GM12878 (cell line): ENCODE measurements at regions of chr5 and their contacts with region 1.

Region 1: DNA sequence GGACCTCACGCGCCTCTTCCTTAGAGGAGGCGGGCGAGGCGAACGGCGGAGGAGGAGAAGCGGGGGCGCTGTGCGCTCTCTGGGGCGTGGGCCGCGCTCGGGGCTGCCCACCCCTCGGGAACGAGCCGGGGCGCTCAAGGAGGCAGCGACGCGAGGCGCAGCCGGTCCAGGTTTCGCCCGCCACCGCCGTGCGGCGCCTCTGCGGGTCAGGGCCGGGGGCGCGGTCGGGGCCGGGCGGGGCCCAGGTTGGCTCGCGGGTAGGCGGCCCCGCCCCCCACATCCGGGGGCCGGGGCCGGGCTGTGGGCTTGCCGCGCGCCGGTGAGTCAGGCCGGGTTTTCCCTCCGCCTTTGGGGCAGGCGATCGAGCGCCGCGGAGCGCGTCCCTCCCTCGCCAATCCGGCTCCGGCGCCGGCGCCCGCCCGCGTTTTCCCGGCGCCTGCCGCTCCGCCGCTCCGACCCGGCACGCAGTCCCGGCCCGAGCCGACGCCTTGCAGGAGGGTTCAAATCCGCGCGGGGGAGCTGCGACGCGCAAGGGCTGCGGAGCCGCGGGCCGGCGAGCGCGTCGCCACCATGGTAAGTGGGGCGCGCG is at the start of gene N4BP3:
- DNase-seq: no peak
- ATAC-seq: peak; percentile 70
- H3K4me3 ChIP-seq: peak within 1 kb of the TSS; percentile 88
- H3K27ac ChIP-seq: peak within 1 kb of the TSS; percentile 72
- H3K4me1 ChIP-seq: peaks cover 30% of the 10 kb centered on the region
- H3K27me3 ChIP-seq: no peaks in the 10 kb centered on the region
- CTCF ChIP-seq: peak in 1 of 3 experiments; percentile 17; a peak in 2 of 6 replicates
- EP300 ChIP-seq: peak; percentile 11 to 62; a peak in 1 of 4 replicates
- POLR2A ChIP-seq: no peak
- RAD21 ChIP-seq: no peak
- polyA plus RNA-seq, gene N4BP3: 0.06 to 0.27 TPM

Region 2: DNA sequence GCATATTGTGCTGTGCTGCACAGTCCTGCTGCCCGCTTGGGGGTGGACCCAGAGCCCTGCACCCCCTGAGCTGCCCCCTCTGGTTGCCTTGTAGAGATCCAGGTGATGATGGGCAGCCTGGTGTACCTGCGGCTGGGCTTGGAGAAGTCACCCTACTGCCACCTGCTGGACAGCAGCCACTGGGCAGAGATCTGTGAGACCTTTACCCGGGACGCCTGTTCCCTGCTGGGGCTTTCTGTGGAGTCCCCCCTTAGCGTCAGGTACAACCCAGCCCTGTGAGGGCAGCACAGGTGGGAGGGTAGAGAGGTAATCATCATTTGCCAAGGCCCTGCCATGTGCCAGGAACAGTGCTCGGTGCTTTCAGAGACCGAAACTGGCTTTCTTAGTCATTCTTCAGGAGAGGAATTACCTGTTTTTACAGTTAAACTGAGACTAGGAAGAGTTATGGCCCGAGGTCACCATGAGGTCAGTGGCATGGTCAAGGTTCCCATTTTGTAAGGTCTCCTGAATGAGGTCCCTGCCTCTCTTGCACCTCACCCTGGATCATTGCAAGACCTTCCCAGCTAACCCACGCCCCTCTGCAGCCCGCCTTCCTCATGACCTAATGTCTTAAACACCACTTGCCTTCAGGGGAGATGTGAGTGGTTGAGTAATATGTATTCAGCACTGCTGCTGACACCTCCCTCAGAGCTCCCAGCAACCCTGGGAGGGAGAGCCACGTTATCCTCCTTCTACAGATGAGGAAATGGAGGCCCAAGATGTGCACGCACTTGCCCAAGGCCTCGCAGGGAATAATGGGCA is 32.9 kb after region 1 on chr5:
- CTCF ChIA-PET with region 1: interaction called, 14 read pairs
- POLR2A ChIA-PET with region 1: interaction called, 4 read pairs
- RAD21 ChIA-PET with region 1: no interaction called
- SMC1A ChIA-PET with region 1: interaction called, 3 read pairs
- in situ Hi-C with region 1: no loop called
- intact Hi-C with region 1: no loop called
- DNase-seq: no peak
- ATAC-seq: peak; percentile 98
- H3K4me3 ChIP-seq: no peak overlapping the region
- H3K27ac ChIP-seq: no peak overlapping the region
- H3K4me1 ChIP-seq: peaks cover 13% of the 10 kb centered on the region
- H3K27me3 ChIP-seq: no peaks in the 10 kb centered on the region
- CTCF ChIP-seq: peak; percentile 85 to 93 (median 89); a peak in 5 of 6 replicates
- EP300 ChIP-seq: no peak
- POLR2A ChIP-seq: peak; percentile 33; the same call in 1 of the 2 replicates
- RAD21 ChIP-seq: peak; percentile 56

Region 3: DNA sequence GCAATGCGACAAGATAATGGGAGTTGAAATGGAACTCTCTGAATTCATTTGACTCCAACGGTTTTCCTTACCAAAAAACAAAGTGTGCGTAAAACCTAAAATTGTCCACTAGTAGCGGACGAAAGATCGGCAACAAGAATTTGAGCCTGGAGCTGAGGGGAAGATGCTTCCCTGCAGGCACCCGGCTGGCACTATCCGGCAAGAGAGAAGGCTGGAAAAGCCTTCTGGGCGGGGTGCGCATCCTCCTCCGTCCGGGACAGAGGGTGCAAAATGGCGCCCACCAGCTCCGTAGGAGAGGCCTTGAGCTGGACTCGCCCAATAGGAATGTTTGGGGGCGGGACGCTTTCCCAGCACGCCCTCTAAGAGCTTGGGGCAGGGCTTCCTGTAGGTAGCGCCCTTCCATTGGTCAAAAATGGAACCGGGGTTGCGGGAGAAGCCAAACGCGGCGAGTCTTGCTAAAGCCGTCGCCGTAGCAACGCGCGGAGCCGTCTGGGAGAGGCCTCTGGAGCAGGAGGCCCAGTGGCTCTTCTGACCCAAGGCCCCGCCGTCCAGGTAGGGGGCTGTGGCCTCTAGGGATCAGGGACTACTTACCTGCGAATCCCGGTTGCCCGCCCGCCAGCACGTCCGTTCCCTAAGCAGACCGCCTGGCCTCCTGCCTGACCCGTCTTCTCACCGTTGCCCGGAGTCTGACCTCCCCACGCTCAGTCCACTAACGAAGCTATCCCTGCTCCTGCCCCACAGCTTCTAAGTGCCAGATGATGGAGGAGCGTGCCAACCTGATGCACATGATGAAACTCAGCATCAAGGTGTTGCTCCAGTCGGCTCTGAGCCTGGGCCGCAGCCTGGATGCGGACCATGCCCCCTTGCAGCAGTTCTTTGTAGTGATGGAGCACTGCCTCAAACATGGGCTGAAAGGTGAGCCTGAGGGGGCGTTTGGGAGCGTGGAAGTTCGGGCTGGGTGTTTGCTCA is 1446.3 kb after region 1 on chr5:
- CTCF ChIA-PET with region 1: no interaction called
- POLR2A ChIA-PET with region 1: no interaction called
- RAD21 ChIA-PET with region 1: no interaction called
- SMC1A ChIA-PET with region 1: no interaction called
- in situ Hi-C with region 1: loop called (anchors 10 kb)
- intact Hi-C with region 1: no loop called
- DNase-seq: peak; percentile 80
- ATAC-seq: peak; percentile 100
- H3K4me3 ChIP-seq: peak overlapping the region; percentile 68
- H3K27ac ChIP-seq: peak overlapping the region; percentile 67
- H3K4me1 ChIP-seq: peaks cover 3% of the 10 kb centered on the region
- H3K27me3 ChIP-seq: no peaks in the 10 kb centered on the region
- CTCF ChIP-seq: no peak
- EP300 ChIP-seq: no peak
- POLR2A ChIP-seq: peak; percentile 93
- RAD21 ChIP-seq: no peak